ENCODE measurements at regions of chr4 and their contacts with region 1.

Region 1: DNA sequence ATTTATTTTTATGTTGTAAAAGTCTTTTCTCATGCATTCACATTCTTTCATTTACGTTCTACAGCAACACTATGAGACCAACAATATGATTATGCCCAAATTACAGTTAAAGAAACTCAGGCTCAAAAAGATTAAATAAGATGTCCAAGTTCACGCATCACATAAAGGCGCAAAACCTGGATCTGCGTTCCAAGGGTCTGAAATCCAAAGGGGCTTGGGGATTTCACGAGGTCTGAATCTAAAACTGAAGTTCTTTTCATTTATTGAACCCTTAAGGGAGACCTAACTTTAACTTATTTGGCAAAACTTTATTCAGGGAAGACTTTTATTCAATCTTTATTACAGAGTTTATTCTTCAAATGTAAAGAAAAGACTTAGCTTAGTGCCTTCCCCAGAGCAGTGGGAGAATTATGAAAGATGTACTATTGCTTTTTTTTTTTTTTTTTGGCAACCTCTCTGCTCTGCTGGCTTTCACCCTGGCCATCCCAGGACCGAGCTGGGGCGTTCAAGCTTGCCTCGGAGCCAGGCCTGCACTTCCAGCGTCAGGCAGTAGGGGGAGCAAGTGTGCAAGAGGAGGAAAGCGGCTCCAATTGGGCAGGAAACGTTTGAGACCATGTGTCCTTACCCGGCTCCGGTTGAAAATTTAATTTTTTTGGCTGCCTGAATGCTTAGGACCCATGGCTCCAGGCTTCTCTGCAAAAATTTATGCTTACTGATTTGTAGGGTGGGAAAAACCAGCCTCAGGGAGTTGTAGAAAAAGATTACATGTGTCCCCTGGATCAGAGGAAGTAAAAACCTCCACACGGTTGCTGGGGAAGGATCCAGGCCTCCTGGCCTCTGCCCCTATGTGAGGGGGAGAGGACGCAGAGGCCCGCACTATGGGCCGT is 344.3 kb upstream of the KLF3 start:
- DNase-seq: peak; percentile 93 to 98 (median 95)
- H3K4me3 ChIP-seq: peak overlapping the region in 2 of 4 donors; percentile 7 to 44
- H3K27ac ChIP-seq: peak overlapping the region; percentile 70 to 88 (median 80)
- H3K4me1 ChIP-seq: peaks cover 10 to 25% of the 10 kb centered on the region in 2 donors
- H3K27me3 ChIP-seq: no peaks in the 10 kb centered on the region
- CTCF ChIP-seq: peak; percentile 97 to 99 (median 98)
- POLR2A ChIP-seq: no peak

Region 2: GRCh38 chr4:38055566-38055965 is 264.1 kb before region 1 on chr4:
- intact Hi-C with region 1: loop called in 1 of 2 experiments (anchors 5 kb)
- DNase-seq: no peak
- H3K4me3 ChIP-seq: no peak overlapping the region
- H3K27ac ChIP-seq: peak overlapping the region in 3 of 5 donors; percentile 11 to 80 (median 38)
- H3K4me1 ChIP-seq: no peaks in the 10 kb centered on the region
- H3K27me3 ChIP-seq: no peaks in the 10 kb centered on the region
- CTCF ChIP-seq: no peak
- POLR2A ChIP-seq: no peak

Region 3: GRCh38 chr4:38078590-38079421 is 240.9 kb before region 1 on chr4:
- intact Hi-C with region 1: loop called in 1 of 2 experiments (anchors 10 kb)
- DNase-seq: no peak
- H3K4me3 ChIP-seq: no peak overlapping the region
- H3K27ac ChIP-seq: peak overlapping the region in 3 of 5 donors; percentile 16 to 51 (median 48)
- H3K4me1 ChIP-seq: peaks cover 8 to 38% of the 10 kb centered on the region in 2 donors
- H3K27me3 ChIP-seq: no peaks in the 10 kb centered on the region
- CTCF ChIP-seq: no peak
- POLR2A ChIP-seq: no peak

Region 4: GRCh38 chr4:38675146-38676121 is 355.7 kb after region 1 on chr4:
- intact Hi-C with region 1: loop called in 1 of 2 experiments (anchors 5 kb)
- DNase-seq: peak; percentile 63 to 95 (median 83)
- H3K4me3 ChIP-seq: no peak overlapping the region
- H3K27ac ChIP-seq: peak overlapping the region; percentile 23 to 99 (median 87)
- H3K4me1 ChIP-seq: peaks cover 53 to 70% of the 10 kb centered on the region in 2 donors
- H3K27me3 ChIP-seq: no peaks in the 10 kb centered on the region
- CTCF ChIP-seq: peak; percentile 83 to 95 (median 90)
- POLR2A ChIP-seq: no peak

Region 5: GRCh38 chr4:38730830-38731646 is 411.3 kb after region 1 on chr4:
- intact Hi-C with region 1: loop called in 1 of 2 experiments (anchors 5 kb)
- DNase-seq: peak; percentile 70 to 93 (median 84)
- H3K4me3 ChIP-seq: no peak overlapping the region
- H3K27ac ChIP-seq: no peak overlapping the region
- H3K4me1 ChIP-seq: no peaks in the 10 kb centered on the region
- H3K27me3 ChIP-seq: no peaks in the 10 kb centered on the region
- CTCF ChIP-seq: peak in 5 of 6 experiments; percentile 87 to 96 (median 96)
- POLR2A ChIP-seq: no peak